Activated B cell treated with CpG ODN at 0.5 μM for 24 hours (primary cell): ENCODE measurements at regions of chr1 and their contacts with region 1.

Region 1: GRCh38 chr1:232950197-232951176 is at the start of gene NTPCR:
- DNase-seq: peak; percentile 97
- ATAC-seq: peak; percentile 89
- H3K4me3 Mint-ChIP-seq: peak within 1 kb of the TSS; percentile 96
- H3K27ac Mint-ChIP-seq: peak within 1 kb of the TSS; percentile 90
- H3K4me1 Mint-ChIP-seq: peaks cover 32% of the 10 kb centered on the region
- H3K27me3 Mint-ChIP-seq: no peaks in the 10 kb centered on the region
- CTCF ChIP-seq: no peak
- total RNA-seq, gene NTPCR: 17.8 and 19.2 TPM in 2 replicates

Region 2: GRCh38 chr1:231528172-231529029 is 1422.1 kb before region 1 on chr1 and contains the start of gene TSNAX:
- CTCF ChIA-PET with region 1: no interaction called
- POLR2A ChIA-PET with region 1: no interaction called
- intact Hi-C with region 1: loop called (anchors 5 kb)
- DNase-seq: peak; percentile 89
- ATAC-seq: peak; percentile 95
- H3K4me3 Mint-ChIP-seq: peak within 1 kb of the TSS; percentile 99
- H3K27ac Mint-ChIP-seq: peak within 1 kb of the TSS; percentile 100
- H3K4me1 Mint-ChIP-seq: peaks cover 33% of the 10 kb centered on the region
- H3K27me3 Mint-ChIP-seq: no peaks in the 10 kb centered on the region
- CTCF ChIP-seq: no peak
- total RNA-seq, gene TSNAX: 30.0 and 38.7 TPM in 2 replicates

Region 3: GRCh38 chr1:232630047-232630893 is 320.2 kb before region 1 on chr1 and contains the start of gene SIPA1L2:
- CTCF ChIA-PET with region 1: no interaction called
- POLR2A ChIA-PET with region 1: no interaction called
- intact Hi-C with region 1: loop called (anchors 2 kb)
- DNase-seq: peak; percentile 84
- ATAC-seq: peak; percentile 98
- H3K4me3 Mint-ChIP-seq: peak within 1 kb of the TSS; percentile 83
- H3K27ac Mint-ChIP-seq: no peak within 1 kb of the TSS
- H3K4me1 Mint-ChIP-seq: peaks cover 10% of the 10 kb centered on the region
- H3K27me3 Mint-ChIP-seq: peaks cover 42% of the 10 kb centered on the region
- CTCF ChIP-seq: no peak
- total RNA-seq, gene SIPA1L2: 0.13 and 0.20 TPM in 2 replicates

Region 4: GRCh38 chr1:232805269-232806185 is 145.0 kb before region 1 on chr1 and contains the start of gene MAP10:
- CTCF ChIA-PET with region 1: no interaction called
- POLR2A ChIA-PET with region 1: interaction called, 5 read pairs
- intact Hi-C with region 1: loop called (anchors 5 kb)
- DNase-seq: peak; percentile 54
- ATAC-seq: peak; percentile 85
- H3K4me3 Mint-ChIP-seq: peak within 1 kb of the TSS; percentile 91
- H3K27ac Mint-ChIP-seq: peak within 1 kb of the TSS; percentile 88
- H3K4me1 Mint-ChIP-seq: peaks cover 16% of the 10 kb centered on the region
- H3K27me3 Mint-ChIP-seq: no peaks in the 10 kb centered on the region
- CTCF ChIP-seq: no peak
- total RNA-seq, gene MAP10: 2.7 and 3.0 TPM in 2 replicates

Region 5: DNA sequence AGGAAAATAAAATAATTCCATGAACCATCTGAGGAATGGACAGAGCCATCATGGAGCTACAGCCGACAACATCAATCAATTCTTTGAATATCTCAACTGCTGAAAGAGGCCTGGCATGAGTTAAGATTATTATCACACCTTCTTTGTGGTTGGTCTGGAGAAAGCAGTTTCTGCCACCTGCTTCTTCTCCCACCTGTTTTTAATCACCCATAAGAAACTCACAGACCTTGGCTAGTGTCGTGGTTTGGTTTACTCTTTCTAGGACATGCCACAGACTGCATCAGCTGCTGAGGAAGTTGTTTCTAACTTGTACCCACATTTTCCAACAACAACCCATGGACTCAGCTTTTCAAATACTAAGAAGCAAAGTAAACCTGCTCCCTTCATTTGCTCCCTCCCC is 65.5 kb after region 1 on chr1:
- CTCF ChIA-PET with region 1: no interaction called
- POLR2A ChIA-PET with region 1: no interaction called
- intact Hi-C with region 1: no loop called
- DNase-seq: no peak
- ATAC-seq: no peak
- H3K4me3 Mint-ChIP-seq: no peak overlapping the region
- H3K27ac Mint-ChIP-seq: no peak overlapping the region
- H3K4me1 Mint-ChIP-seq: no peaks in the 10 kb centered on the region
- H3K27me3 Mint-ChIP-seq: no peaks in the 10 kb centered on the region
- CTCF ChIP-seq: no peak

Region 6: DNA sequence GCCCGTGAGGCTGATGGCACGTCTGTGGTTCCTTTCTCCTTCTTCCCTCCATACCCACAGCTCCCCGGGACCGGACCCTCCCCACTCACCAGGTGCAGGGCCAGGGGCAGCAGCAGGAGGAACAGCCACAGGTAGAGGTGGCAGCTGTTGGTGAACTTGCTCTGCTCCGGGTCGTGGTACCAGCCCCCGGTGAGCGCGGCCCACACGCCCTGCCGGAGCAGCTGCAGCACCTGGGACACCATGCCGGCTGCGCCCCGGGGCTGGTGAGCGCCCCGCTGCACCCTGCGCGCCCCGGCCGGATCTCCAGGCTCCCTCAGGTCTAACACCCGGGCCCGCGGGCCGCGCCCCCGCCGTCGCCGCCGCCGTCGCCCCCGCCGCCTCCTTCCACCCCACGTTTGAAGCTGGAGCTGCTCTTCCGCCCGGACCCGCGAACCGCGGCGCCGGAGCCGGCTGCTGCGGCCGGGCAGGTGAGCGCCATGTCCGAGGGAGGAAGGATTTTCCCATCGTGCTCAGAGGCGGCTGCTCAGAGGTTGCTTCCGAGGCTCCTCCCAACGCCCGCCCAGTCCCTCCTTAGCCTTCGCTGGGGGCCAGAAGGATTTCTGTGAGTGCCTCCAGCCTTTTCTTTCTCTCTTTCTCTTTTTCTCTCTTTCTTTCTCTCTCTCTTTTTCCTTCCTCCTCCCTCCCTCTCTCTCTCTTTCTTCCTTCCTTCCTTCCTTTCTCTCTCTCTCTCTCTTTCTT is 344.9 kb after region 1 on chr1 and contains the start of gene PCNX2:
- CTCF ChIA-PET with region 1: no interaction called
- POLR2A ChIA-PET with region 1: no interaction called
- intact Hi-C with region 1: loop called (anchors 1 kb)
- DNase-seq: peak; percentile 41
- ATAC-seq: peak; percentile 84
- H3K4me3 Mint-ChIP-seq: peak within 1 kb of the TSS; percentile 84
- H3K27ac Mint-ChIP-seq: peak within 1 kb of the TSS; percentile 69
- H3K4me1 Mint-ChIP-seq: peaks cover 14% of the 10 kb centered on the region
- H3K27me3 Mint-ChIP-seq: peaks cover 2% of the 10 kb centered on the region
- CTCF ChIP-seq: no peak
- total RNA-seq, gene PCNX2: 18.4 and 20.4 TPM in 2 replicates

Region 7: GRCh38 chr1:233326811-233327650 is 376.5 kb after region 1 on chr1:
- CTCF ChIA-PET with region 1: no interaction called
- POLR2A ChIA-PET with region 1: interaction called, 4 read pairs
- intact Hi-C with region 1: loop called (anchors 1 kb)
- DNase-seq: peak; percentile 93
- ATAC-seq: peak; percentile 96
- H3K4me3 Mint-ChIP-seq: peak overlapping the region; percentile 82
- H3K27ac Mint-ChIP-seq: peak overlapping the region; percentile 53
- H3K4me1 Mint-ChIP-seq: peaks cover 11% of the 10 kb centered on the region
- H3K27me3 Mint-ChIP-seq: no peaks in the 10 kb centered on the region
- CTCF ChIP-seq: no peak